ENCODE measurements at regions of chr4 and their contacts with region 1.

Region 1: GRCh38 chr4:83012687-83013419 is 2.2 kb upstream of the LIN54 start:
- DNase-seq: peak; percentile 98
- H3K4me3 ChIP-seq: peak overlapping the region; percentile 71 to 92 (median 84)
- H3K27ac ChIP-seq: peak overlapping the region; percentile 91 to 95 (median 94)
- H3K4me1 ChIP-seq: peaks cover 22 to 48% (median 42%) of the 10 kb centered on the region in 4 donors
- H3K27me3 ChIP-seq: no peaks in the 10 kb centered on the region
- CTCF ChIP-seq: peak; percentile 30 to 76 (median 41)
- EP300 ChIP-seq: peak; percentile 55
- POLR2A ChIP-seq: peak; percentile 24

Region 2: DNA sequence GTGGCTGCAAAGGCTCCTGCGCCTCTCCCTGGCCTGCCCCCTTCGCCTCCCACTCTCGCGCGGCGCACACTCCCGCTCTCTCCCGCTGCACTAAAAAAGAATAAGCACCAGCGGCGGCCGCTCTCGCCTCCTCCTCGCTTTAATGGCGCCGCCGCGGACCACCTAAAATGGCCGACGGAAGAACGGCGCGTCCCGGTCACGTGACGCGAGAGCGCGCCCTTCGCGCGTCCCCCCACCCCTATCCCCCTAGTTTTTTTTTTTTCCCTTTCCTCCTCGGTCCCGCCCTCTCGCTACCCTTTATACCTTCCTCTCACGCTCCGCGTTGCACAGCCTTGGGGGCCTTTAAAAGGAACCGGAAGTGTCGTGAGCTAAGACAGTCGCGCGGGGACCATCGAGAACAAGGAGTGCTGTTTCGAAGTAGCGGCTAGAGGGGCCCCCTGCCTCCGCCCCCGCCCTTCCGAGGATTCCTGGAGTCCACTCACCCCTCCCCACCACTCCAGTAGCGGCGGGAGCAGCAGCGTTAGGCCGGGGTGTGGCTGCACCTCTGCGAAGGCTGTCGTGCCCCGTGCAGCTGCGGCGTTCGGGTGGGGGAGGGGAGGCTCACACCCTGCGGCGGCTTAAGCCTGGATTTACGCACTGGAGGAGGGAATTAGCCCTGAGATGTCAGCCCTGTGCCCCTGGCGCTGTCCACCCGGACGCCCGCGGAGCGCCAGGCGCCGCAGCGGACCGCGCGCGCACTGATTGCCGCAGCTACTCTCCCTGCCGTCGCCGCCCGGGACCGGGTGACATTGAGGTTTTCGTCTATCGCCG is 638.8 kb before region 1 on chr4 and contains the start of gene HNRNPD:
- intact Hi-C with region 1: loop called (anchors 5 kb)
- DNase-seq: peak; percentile 99
- H3K4me3 ChIP-seq: peak within 1 kb of the TSS; percentile 84 to 96 (median 94)
- H3K27ac ChIP-seq: peak within 1 kb of the TSS; percentile 99 to 100 (median 100)
- H3K4me1 ChIP-seq: peaks cover 25 to 63% (median 58%) of the 10 kb centered on the region in 4 donors
- H3K27me3 ChIP-seq: no peaks in the 10 kb centered on the region
- CTCF ChIP-seq: peak; percentile 10 to 18 (median 17)
- EP300 ChIP-seq: no peak
- POLR2A ChIP-seq: peak; percentile 86
- total RNA-seq, gene HNRNPD: 53.9 to 85.6 (median 69.0) TPM

Region 3: GRCh38 chr4:82428969-82429727 is 583.7 kb before region 1 on chr4:
- intact Hi-C with region 1: loop called (anchors 10 kb)
- DNase-seq: peak; percentile 96
- H3K4me3 ChIP-seq: peak overlapping the region; percentile 77 to 98 (median 94)
- H3K27ac ChIP-seq: peak overlapping the region; percentile 98 to 100 (median 98)
- H3K4me1 ChIP-seq: peaks cover 30 to 61% (median 53%) of the 10 kb centered on the region in 4 donors
- H3K27me3 ChIP-seq: no peaks in the 10 kb centered on the region
- CTCF ChIP-seq: peak; percentile 91 to 98 (median 94)
- EP300 ChIP-seq: no peak
- POLR2A ChIP-seq: peak; percentile 79

Region 4: GRCh38 chr4:82798168-82799005 is 214.5 kb before region 1 on chr4 and contains the start of gene SCD5:
- intact Hi-C with region 1: loop called (anchors 10 kb)
- DNase-seq: no peak
- H3K4me3 ChIP-seq: peak within 1 kb of the TSS; percentile 66 to 94 (median 80)
- H3K27ac ChIP-seq: peak within 1 kb of the TSS; percentile 71 to 83 (median 78)
- H3K4me1 ChIP-seq: peaks cover 16 to 43% (median 35%) of the 10 kb centered on the region in 4 donors
- H3K27me3 ChIP-seq: no peaks in the 10 kb centered on the region
- CTCF ChIP-seq: no peak
- EP300 ChIP-seq: no peak
- POLR2A ChIP-seq: no peak
- total RNA-seq, gene SCD5: 17.6 to 28.4 (median 22.9) TPM

Region 5: GRCh38 chr4:82900331-82901128 is 112.3 kb before region 1 on chr4 and contains the start of gene THAP9:
- intact Hi-C with region 1: loop called (anchors 5 kb)
- DNase-seq: peak; percentile 99
- H3K4me3 ChIP-seq: peak within 1 kb of the TSS; percentile 71 to 80 (median 75)
- H3K27ac ChIP-seq: peak within 1 kb of the TSS; percentile 90 to 98 (median 97)
- H3K4me1 ChIP-seq: peaks cover 31 to 44% (median 36%) of the 10 kb centered on the region in 4 donors
- H3K27me3 ChIP-seq: no peaks in the 10 kb centered on the region
- CTCF ChIP-seq: no peak
- EP300 ChIP-seq: no peak
- POLR2A ChIP-seq: peak; percentile 87
- total RNA-seq, gene THAP9: 2.1 to 5.2 (median 2.9) TPM

Region 6: DNA sequence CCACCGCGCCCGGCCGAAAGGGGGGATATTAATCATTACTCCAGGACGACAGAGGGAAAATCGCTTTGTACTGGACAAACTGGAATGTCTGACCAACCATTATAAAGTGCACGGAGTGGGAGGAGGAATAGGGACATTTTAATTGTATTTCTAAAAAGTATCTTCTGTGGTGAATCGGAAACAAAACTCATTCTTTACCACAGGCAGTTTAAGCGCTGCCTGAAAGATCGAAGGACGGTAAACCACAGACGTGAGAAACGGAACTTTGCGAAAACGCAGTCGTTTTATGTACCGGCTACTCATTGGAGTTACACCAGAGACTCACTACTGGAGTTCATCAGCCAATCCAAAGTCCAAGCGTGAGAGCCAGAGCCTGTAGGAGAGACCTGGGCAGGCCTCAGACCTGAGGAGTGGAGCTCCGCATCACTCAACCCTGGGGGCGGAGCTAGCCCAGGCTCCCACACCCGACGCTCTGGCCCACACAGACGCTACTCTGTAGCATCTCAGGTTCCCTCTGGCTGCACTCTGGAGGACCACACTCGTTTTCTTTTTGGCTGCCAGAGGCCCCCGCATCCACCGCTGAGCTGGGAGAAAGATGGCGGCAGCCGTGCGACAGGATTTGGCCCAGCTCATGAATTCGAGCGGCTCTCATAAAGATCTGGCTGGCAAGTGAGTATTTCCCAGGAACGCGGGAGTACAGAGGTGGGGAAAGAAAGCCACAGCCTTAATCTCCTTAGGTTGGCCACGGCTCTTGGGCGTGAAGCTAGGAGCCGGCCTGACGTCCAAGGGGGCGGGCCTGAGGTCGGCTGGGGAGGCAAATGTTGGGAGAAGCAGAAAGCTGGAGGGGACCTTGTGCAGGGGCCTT is 22.0 kb after region 1 on chr4 and contains the start of gene COPS4:
- intact Hi-C with region 1: loop called (anchors 1 kb)
- DNase-seq: peak; percentile 98
- H3K4me3 ChIP-seq: peak within 1 kb of the TSS; percentile 70 to 88 (median 76)
- H3K27ac ChIP-seq: peak within 1 kb of the TSS; percentile 89 to 91 (median 90)
- H3K4me1 ChIP-seq: peaks cover 21 to 39% (median 27%) of the 10 kb centered on the region in 4 donors
- H3K27me3 ChIP-seq: no peaks in the 10 kb centered on the region
- CTCF ChIP-seq: peak; percentile 29 to 60 (median 55)
- EP300 ChIP-seq: no peak
- POLR2A ChIP-seq: peak; percentile 20
- total RNA-seq, gene COPS4: 54.8 to 63.7 (median 57.7) TPM

Region 7: GRCh38 chr4:83255584-83255983 is 242.7 kb after region 1 on chr4:
- intact Hi-C with region 1: no loop called
- DNase-seq: no peak
- H3K4me3 ChIP-seq: no peak overlapping the region
- H3K27ac ChIP-seq: no peak overlapping the region
- H3K4me1 ChIP-seq: peaks cover 4 to 28% (median 22%) of the 10 kb centered on the region in 4 donors
- H3K27me3 ChIP-seq: no peaks in the 10 kb centered on the region
- CTCF ChIP-seq: no peak
- EP300 ChIP-seq: no peak
- POLR2A ChIP-seq: no peak

Region 8: DNA sequence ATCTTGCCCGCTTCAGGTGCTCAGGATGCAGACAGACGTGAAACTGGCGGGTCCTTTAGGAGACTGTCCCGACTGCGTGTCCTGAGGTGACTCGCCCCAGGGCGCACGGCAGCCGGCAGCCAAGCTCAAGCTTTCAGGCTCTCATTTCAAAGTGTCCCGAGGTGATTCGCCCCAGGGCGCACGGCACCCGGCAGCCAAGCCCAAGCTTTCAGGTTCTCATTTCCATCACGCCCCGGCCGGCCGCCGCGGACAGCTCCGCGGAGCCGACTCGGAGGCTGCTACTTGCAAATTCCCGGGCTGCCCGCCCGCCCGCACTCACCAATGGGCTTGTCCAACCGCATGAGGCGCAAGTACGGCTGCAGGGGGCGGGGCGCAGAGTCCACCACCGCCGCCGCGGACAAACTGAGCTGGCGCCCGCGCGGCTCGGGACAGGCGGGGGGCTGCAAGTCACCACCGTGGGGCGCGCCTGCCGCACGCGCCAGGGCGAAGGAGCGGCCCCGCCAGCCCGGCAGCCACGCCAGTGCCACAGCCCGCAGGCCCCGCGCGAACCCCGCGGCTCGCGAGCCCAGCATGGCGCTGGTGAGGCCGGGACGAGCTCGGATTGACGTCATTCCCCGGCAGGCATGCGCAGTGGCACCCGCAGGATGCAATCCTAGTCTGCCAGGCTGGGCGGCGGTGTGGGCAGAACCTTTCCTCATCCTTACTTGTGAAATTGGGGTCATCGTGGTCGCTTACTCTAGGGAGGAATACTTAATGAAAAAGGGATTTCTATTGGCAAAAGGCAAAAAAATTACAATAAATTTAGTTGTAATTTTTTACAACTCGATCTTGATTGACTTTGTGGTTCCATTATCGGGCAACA is 271.6 kb after region 1 on chr4 and contains the start of gene COQ2:
- intact Hi-C with region 1: loop called (anchors 10 kb)
- DNase-seq: peak; percentile 98
- H3K4me3 ChIP-seq: peak within 1 kb of the TSS; percentile 78 to 89 (median 86)
- H3K27ac ChIP-seq: peak within 1 kb of the TSS; percentile 91 to 98 (median 96)
- H3K4me1 ChIP-seq: peaks cover 13 to 21% (median 15%) of the 10 kb centered on the region in 4 donors
- H3K27me3 ChIP-seq: no peaks in the 10 kb centered on the region
- CTCF ChIP-seq: peak; percentile 27 to 46 (median 44)
- EP300 ChIP-seq: no peak
- POLR2A ChIP-seq: peak; percentile 23
- total RNA-seq, gene COQ2: 4.6 to 6.5 (median 5.4) TPM

Measured in esophagus muscularis mucosa (tissue), 4 donors.